ENCODE measurements at regions of chr3 and their contacts with region 1.

Region 1: GRCh38 chr3:168371846-168372245 is 276.1 kb upstream of the GOLIM4 start:
- DNase-seq: no peak
- ATAC-seq: no peak
- H3K4me3 ChIP-seq: no peak overlapping the region
- H3K27ac ChIP-seq: no peak overlapping the region
- H3K4me1 ChIP-seq: no peaks in the 10 kb centered on the region
- H3K27me3 ChIP-seq: no peaks in the 10 kb centered on the region
- CTCF ChIP-seq: no peak
- POLR2A ChIP-seq: no peak
- RAD21 ChIP-seq: no peak

Region 2: DNA sequence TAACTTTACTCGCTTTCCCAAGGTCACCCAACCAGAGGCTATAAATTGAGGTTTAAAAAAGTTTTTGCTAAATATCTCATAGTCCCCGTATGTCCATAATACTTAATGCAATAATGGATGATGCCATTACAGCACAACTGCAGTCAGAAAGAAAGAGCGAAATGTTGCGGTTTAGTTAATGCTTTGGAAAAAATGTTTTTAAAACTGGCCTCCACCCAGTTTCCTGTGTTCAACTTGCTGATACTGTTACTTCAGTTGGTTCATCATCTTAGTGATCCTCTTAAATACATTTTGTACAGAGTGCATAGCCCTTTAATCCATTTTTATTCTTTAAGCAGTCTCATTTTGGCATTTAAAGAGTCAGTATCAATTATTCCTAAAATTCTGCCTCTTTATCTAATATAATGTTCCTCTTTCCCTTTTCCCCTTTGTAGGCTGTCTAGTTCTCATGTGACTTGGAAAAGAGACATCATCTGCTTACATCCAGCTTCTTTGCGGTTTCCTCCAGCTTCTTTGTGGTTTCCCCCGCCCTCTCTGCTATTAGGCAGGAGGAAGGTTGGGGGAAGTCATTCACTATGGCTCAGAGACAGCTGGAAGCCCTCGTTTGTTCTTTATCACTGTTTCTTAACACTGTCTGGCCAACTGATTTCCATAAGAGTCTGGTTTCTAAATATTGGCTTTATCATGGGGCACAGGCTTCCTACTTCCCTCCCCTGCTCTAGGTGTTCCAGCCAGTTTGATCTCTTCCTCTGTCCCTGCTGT is 430.4 kb before region 1 on chr3:
- CTCF ChIA-PET with region 1: no interaction called
- POLR2A ChIA-PET with region 1: no interaction called
- RAD21 ChIA-PET with region 1: no interaction called
- intact Hi-C with region 1: loop called (anchors 5 kb)
- DNase-seq: no peak
- ATAC-seq: peak; percentile 47
- H3K4me3 ChIP-seq: no peak overlapping the region
- H3K27ac ChIP-seq: no peak overlapping the region
- H3K4me1 ChIP-seq: no peaks in the 10 kb centered on the region; a peak in 1 of 4 replicates
- H3K27me3 ChIP-seq: no peaks in the 10 kb centered on the region
- CTCF ChIP-seq: no peak
- POLR2A ChIP-seq: no peak
- RAD21 ChIP-seq: no peak

Region 3: GRCh38 chr3:168165390-168166269 is 206.2 kb before region 1 on chr3:
- CTCF ChIA-PET with region 1: no interaction called
- POLR2A ChIA-PET with region 1: no interaction called
- RAD21 ChIA-PET with region 1: no interaction called
- intact Hi-C with region 1: no loop called
- DNase-seq: peak; percentile 65
- ATAC-seq: peak; percentile 90
- H3K4me3 ChIP-seq: no peak overlapping the region
- H3K27ac ChIP-seq: no peak overlapping the region
- H3K4me1 ChIP-seq: no peaks in the 10 kb centered on the region
- H3K27me3 ChIP-seq: no peaks in the 10 kb centered on the region
- CTCF ChIP-seq: peak; percentile 54 to 97 (median 77)
- POLR2A ChIP-seq: no peak
- RAD21 ChIP-seq: peak; percentile 89

Measured in HCT116 (cell line).